ENCODE measurements at regions of chr2 and their contacts with region 1.

Region 1: DNA sequence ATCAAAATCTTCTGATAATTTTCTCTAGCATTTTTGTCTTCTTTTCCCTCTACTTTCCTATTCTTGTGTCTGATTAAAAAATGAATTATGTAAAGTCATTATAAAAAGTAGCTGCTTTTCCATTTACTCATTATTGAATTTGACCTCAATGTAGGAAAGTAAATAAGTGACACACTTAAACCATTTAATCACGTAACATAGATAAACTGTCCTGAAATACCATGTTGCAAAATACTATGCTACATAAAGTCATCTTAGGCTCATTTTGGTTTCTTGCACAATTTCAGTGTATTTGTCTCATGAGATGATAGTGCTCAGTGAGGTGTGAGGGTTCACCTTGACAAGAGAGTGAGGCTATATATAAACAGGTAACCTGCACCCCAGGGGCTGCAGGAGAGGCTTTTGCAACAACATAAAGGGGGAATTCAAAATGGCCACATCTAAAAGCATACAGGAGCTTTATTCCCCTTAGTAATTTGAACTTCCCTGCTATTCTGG is 502.7 kb downstream of the RNF144A start:
- DNase-seq: no peak
- ATAC-seq: no peak
- H3K4me3 ChIP-seq: no peak overlapping the region
- H3K27ac ChIP-seq: no peak overlapping the region
- H3K4me1 ChIP-seq: no peaks in the 10 kb centered on the region
- H3K27me3 ChIP-seq: peaks cover 0 to 13% of the 10 kb centered on the region in 2 experiments; a peak in 2 of 4 replicates
- CTCF ChIP-seq: no peak
- EP300 ChIP-seq: no peak
- POLR2A ChIP-seq: no peak
- RAD21 ChIP-seq: no peak

Region 2: DNA sequence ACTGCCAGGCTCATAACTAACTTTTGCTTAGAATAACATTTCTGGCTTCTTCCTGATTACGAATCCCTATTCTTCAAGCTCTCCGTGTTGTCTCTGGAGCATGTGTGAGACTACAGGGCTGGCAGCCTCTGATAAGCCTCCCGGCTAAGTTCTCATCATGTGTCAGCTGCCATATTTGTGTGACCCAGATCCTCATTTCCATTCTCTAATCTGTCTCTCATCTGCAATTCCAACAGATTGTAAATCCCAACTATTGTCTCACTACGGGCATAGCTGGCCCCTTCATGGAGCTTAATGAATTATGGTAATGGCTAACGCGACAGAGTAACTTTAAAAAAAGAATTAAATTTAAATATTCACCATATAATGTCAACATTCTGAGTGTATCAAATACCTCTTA is 719.5 kb before region 1 on chr2:
- CTCF ChIA-PET with region 1: no interaction called
- POLR2A ChIA-PET with region 1: no interaction called
- RAD21 ChIA-PET with region 1: no interaction called
- SMC1A ChIA-PET with region 1: no interaction called
- in situ Hi-C with region 1: no loop called
- intact Hi-C with region 1: no loop called
- DNase-seq: no peak
- ATAC-seq: no peak
- H3K4me3 ChIP-seq: no peak overlapping the region
- H3K27ac ChIP-seq: no peak overlapping the region
- H3K4me1 ChIP-seq: no peaks in the 10 kb centered on the region
- H3K27me3 ChIP-seq: no peaks in the 10 kb centered on the region
- CTCF ChIP-seq: no peak
- EP300 ChIP-seq: no peak
- POLR2A ChIP-seq: no peak
- RAD21 ChIP-seq: no peak

Region 3: GRCh38 chr2:7118606-7119503 is 301.0 kb before region 1 on chr2:
- CTCF ChIA-PET with region 1: interaction called, 3 read pairs
- POLR2A ChIA-PET with region 1: no interaction called
- RAD21 ChIA-PET with region 1: no interaction called
- SMC1A ChIA-PET with region 1: no interaction called
- in situ Hi-C with region 1: no loop called
- intact Hi-C with region 1: loop called (anchors 2 kb)
- DNase-seq: no peak
- ATAC-seq: peak; percentile 85
- H3K4me3 ChIP-seq: no peak overlapping the region
- H3K27ac ChIP-seq: no peak overlapping the region
- H3K4me1 ChIP-seq: no peaks in the 10 kb centered on the region
- H3K27me3 ChIP-seq: no peaks in the 10 kb centered on the region
- CTCF ChIP-seq: peak; percentile 33 to 65 (median 43); a peak in 5 of 6 replicates
- EP300 ChIP-seq: no peak
- POLR2A ChIP-seq: no peak
- RAD21 ChIP-seq: peak; percentile 53

Region 4: DNA sequence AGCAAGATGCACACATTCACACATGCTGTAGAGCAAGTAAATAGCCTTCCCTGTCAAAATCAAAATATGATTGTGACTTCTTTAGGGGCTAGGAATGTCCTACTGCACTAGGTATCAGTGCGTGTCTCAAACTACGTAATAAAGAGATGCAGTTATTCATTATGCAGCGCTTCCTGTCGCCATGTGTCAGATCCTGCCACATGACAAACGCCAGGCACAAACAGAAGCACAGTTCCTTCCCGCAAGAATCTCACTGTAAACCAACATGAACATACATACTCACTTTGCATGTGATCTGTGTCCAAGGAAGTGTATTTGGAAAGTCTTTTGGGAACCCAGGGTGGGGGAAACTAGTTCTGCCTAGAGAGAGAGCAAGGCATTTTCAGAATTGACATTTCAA is 97.2 kb after region 1 on chr2:
- CTCF ChIA-PET with region 1: no interaction called
- POLR2A ChIA-PET with region 1: no interaction called
- RAD21 ChIA-PET with region 1: no interaction called
- SMC1A ChIA-PET with region 1: no interaction called
- in situ Hi-C with region 1: no loop called
- intact Hi-C with region 1: no loop called
- DNase-seq: no peak
- ATAC-seq: peak; percentile 68
- H3K4me3 ChIP-seq: no peak overlapping the region
- H3K27ac ChIP-seq: no peak overlapping the region
- H3K4me1 ChIP-seq: peaks cover 17% of the 10 kb centered on the region
- H3K27me3 ChIP-seq: peaks cover 0 to 2% of the 10 kb centered on the region in 2 experiments; a peak in 1 of 4 replicates
- CTCF ChIP-seq: no peak
- EP300 ChIP-seq: no peak; a peak in 2 of 4 replicates
- POLR2A ChIP-seq: no peak
- RAD21 ChIP-seq: no peak

Region 5: DNA sequence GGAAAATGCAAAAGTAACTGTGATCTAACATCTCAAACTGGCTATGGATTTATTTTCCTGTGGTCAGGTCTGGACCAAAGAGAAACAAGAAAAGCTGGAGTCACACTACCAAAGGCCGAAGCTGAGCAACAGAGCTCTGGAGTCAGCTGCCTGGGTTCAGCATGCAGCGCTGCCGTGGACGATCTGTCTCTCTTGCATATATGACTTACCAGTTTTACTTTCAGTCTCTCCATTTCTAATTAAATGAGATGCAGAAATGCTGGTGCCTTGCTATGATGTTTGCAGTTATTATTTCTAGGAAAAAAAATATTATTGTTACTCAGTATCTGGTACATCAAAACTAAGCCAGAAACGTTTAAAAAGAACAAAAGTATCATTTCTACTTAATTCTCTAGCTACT is 310.6 kb after region 1 on chr2:
- CTCF ChIA-PET with region 1: no interaction called
- POLR2A ChIA-PET with region 1: no interaction called
- RAD21 ChIA-PET with region 1: no interaction called
- SMC1A ChIA-PET with region 1: no interaction called
- in situ Hi-C with region 1: no loop called
- intact Hi-C with region 1: no loop called
- DNase-seq: no peak
- ATAC-seq: peak; percentile 24
- H3K4me3 ChIP-seq: no peak overlapping the region
- H3K27ac ChIP-seq: no peak overlapping the region
- H3K4me1 ChIP-seq: no peaks in the 10 kb centered on the region
- H3K27me3 ChIP-seq: no peaks in the 10 kb centered on the region; a peak in 1 of 4 replicates
- CTCF ChIP-seq: no peak
- EP300 ChIP-seq: no peak
- POLR2A ChIP-seq: no peak
- RAD21 ChIP-seq: no peak